AG04450 (cell line): ENCODE measurements at regions of chr3 and their contacts with region 1.

Region 1: GRCh38 chr3:27253831-27254230 is 115.4 kb downstream of the NEK10 start:
- DNase-seq: no peak
- H3K4me3 ChIP-seq: no peak overlapping the region
- H3K27ac ChIP-seq: no peak overlapping the region
- H3K27me3 ChIP-seq: no peaks in the 10 kb centered on the region
- CTCF ChIP-seq: peak; percentile 60

Region 2: GRCh38 chr3:27141668-27142067 is 112.2 kb before region 1 on chr3:
- CTCF ChIA-PET with region 1: interaction called, 16 read pairs
- POLR2A ChIA-PET with region 1: no interaction called
- DNase-seq: no peak
- H3K4me3 ChIP-seq: no peak overlapping the region
- H3K27ac ChIP-seq: no peak overlapping the region
- H3K27me3 ChIP-seq: no peaks in the 10 kb centered on the region
- CTCF ChIP-seq: no peak

Region 3: DNA sequence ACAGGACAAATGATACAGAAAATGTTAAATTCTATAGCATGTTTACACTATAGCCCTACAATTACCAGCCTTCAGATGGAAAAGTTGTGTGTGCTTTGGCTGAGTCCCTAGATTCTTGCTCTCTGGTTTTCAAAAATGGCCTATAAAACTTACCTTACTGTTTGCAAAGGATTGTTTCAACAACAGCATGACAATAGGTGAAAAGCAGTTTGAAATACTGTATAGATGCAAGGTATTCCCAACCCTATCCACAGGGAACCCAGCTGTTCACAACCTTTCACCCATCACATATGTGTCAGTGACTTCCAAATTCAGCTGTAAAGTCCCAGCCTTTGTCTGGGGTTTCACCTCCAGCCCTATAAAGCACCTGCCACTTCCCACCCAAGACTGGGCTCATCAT is 18.1 kb after region 1 on chr3:
- CTCF ChIA-PET with region 1: interaction called, 21 read pairs
- POLR2A ChIA-PET with region 1: no interaction called
- DNase-seq: no peak
- H3K4me3 ChIP-seq: no peak overlapping the region
- H3K27ac ChIP-seq: no peak overlapping the region
- H3K27me3 ChIP-seq: no peaks in the 10 kb centered on the region
- CTCF ChIP-seq: no peak